Activated CD4-positive, alpha-beta T cell treated with anti-CD3 and anti-CD28 coated beads, Interleukin-2, amount 10 ng/mL, durations not matched to agents 24 days and 14 days (primary cell): ENCODE measurements at regions of chrX and their contacts with region 1.

Region 1: DNA sequence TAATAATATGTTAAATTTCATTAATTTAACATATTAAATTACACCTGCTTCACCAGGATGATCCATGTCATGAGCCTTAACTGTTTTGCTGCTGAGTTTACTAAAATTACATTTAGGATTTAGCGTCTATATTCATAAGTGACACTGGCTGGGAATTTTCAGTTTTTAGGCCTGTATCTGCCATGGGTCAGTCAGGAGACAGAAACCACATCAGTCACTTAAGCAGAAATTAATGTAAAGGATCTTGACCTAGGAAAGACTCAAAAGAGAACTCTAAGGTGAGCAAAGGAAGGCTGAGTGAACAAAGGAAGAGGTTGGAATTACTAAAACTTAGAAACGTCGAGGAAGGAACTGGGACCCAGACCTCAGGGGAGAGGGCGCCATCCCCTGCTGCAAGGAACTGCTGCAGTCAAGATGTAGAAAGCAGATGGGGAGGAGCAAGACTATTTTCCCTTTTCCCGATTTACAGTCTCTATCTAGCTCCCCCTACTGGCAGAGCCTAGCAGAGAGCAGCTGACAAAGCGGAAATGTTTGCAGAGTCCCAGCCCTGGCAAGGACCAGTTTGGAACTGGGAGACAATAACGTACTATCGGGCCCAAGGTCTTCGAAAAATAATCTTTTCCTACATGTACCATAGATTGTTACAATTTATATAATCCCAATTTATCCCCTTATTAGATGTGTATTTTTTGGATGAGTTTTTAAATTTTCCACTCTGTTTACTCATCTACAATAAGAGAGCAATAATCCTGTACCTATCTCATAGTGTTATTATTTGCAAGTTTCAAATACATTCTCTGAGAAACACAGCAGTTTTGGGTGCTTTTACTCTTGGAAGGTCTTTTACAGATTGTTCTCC is 22.6 kb upstream of the RBBP7 start:
- DNase-seq: peak; percentile 86
- H3K4me3 Mint-ChIP-seq: no peak overlapping the region
- H3K27ac Mint-ChIP-seq: no peak overlapping the region
- H3K4me1 Mint-ChIP-seq: peaks cover 14% of the 10 kb centered on the region
- H3K27me3 Mint-ChIP-seq: peaks cover 3% of the 10 kb centered on the region

Region 2: DNA sequence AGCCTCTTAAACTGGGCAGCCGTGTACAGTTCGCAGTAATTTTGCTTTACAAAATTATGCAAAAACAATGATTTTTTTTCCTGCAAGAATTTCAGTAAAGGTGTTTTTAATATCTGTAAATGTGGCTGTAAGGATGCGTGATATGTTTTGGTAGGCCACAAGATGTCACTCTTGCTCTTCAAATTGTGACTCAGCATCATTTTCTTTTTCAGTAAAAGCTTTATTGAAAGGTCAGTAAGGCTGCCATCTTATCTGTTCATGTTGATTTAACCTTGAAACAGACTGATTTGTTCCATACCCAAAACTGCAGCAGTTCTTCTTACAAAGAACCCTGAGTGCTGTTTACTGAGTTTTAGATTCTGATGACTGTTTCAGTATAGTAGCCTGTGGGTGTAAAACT is 66.5 kb before region 1 on chrX:
- intact Hi-C with region 1: loop called (anchors 2 kb)
- DNase-seq: peak; percentile 59
- H3K4me3 Mint-ChIP-seq: no peak overlapping the region
- H3K27ac Mint-ChIP-seq: peak overlapping the region; percentile 15
- H3K4me1 Mint-ChIP-seq: peaks cover 13% of the 10 kb centered on the region
- H3K27me3 Mint-ChIP-seq: no peaks in the 10 kb centered on the region